ENCODE measurements at regions of chr10 and their contacts with region 1.

Region 1: DNA sequence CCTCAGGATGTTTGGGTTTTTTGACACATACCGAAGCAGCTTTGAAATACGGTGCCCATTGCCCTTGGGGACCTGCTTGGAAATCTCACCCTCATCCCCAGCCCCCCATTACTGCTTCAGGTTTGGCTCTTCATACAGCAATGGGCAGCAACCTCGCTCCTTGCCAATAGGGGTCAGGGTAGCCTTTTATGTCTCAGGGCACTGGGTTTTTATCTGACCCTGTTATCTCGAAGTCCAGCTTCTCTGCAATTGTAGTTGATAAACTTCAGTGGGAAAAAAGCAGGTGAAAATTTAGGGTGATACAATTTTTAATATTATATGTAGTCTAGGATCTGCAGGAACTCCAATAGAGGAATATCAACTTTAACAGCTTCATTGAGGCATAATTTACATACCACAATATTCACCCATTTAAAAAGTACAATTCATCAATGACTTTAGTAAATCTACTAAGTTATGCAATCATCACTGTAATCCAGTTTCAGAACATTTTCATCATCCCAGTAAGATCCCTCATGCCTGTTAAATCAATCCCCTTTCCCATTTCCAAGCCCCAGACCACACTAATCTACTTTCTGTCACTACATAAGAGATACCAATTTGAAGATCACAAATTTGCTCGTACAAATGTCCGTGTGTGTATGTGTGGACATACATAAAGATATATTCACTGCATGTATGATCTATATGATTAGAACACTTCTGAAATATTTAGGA is 386.2 kb downstream of the KCNMA1 start:
- DNase-seq: no peak
- ATAC-seq: peak; percentile 94
- H3K4me3 ChIP-seq: no peak overlapping the region
- H3K27ac ChIP-seq: no peak overlapping the region
- H3K4me1 ChIP-seq: no peaks in the 10 kb centered on the region
- H3K27me3 ChIP-seq: no peaks in the 10 kb centered on the region
- CTCF ChIP-seq: peak; percentile 59 to 76 (median 64)
- EP300 ChIP-seq: no peak
- POLR2A ChIP-seq: no peak
- RAD21 ChIP-seq: peak; percentile 66

Region 2: GRCh38 chr10:76150139-76150875 is 1101.1 kb before region 1 on chr10:
- CTCF ChIA-PET with region 1: no interaction called
- POLR2A ChIA-PET with region 1: no interaction called
- RAD21 ChIA-PET with region 1: no interaction called
- SMC1A ChIA-PET with region 1: no interaction called
- in situ Hi-C with region 1: no loop called
- intact Hi-C with region 1: no loop called
- DNase-seq: no peak
- ATAC-seq: no peak; the same call in 2 of the 3 replicates
- H3K4me3 ChIP-seq: no peak overlapping the region
- H3K27ac ChIP-seq: no peak overlapping the region
- H3K4me1 ChIP-seq: no peaks in the 10 kb centered on the region
- H3K27me3 ChIP-seq: no peaks in the 10 kb centered on the region
- CTCF ChIP-seq: no peak
- EP300 ChIP-seq: no peak
- POLR2A ChIP-seq: no peak
- RAD21 ChIP-seq: no peak

Region 3: GRCh38 chr10:77131214-77131613 is 120.2 kb before region 1 on chr10:
- CTCF ChIA-PET with region 1: no interaction called
- POLR2A ChIA-PET with region 1: no interaction called
- RAD21 ChIA-PET with region 1: no interaction called
- SMC1A ChIA-PET with region 1: no interaction called
- in situ Hi-C with region 1: no loop called
- intact Hi-C with region 1: no loop called
- DNase-seq: no peak
- ATAC-seq: no peak
- H3K4me3 ChIP-seq: no peak overlapping the region
- H3K27ac ChIP-seq: no peak overlapping the region
- H3K4me1 ChIP-seq: no peaks in the 10 kb centered on the region
- H3K27me3 ChIP-seq: no peaks in the 10 kb centered on the region
- CTCF ChIP-seq: no peak
- EP300 ChIP-seq: no peak
- POLR2A ChIP-seq: no peak
- RAD21 ChIP-seq: no peak

Region 4: GRCh38 chr10:77264107-77264506 is 12.7 kb after region 1 on chr10:
- CTCF ChIA-PET with region 1: interaction called, 3 read pairs
- POLR2A ChIA-PET with region 1: interaction called, 3 read pairs
- RAD21 ChIA-PET with region 1: interaction called, 6 read pairs
- SMC1A ChIA-PET with region 1: interaction called, 22 read pairs
- in situ Hi-C with region 1: no loop called
- intact Hi-C with region 1: no loop called
- DNase-seq: peak; percentile 42
- ATAC-seq: peak; percentile 98
- H3K4me3 ChIP-seq: no peak overlapping the region
- H3K27ac ChIP-seq: no peak overlapping the region
- H3K4me1 ChIP-seq: peaks cover 6% of the 10 kb centered on the region; the same call in 1 of the 2 replicates
- H3K27me3 ChIP-seq: 0 out of 4 replicates have a peak, but pooled peaks cover 0 to 3% of the 10 kb centered on the region in 2 experiments
- CTCF ChIP-seq: no peak
- EP300 ChIP-seq: peak in 1 of 2 experiments; percentile 61; a peak in 2 of 4 replicates
- POLR2A ChIP-seq: no peak
- RAD21 ChIP-seq: no peak

Region 5: DNA sequence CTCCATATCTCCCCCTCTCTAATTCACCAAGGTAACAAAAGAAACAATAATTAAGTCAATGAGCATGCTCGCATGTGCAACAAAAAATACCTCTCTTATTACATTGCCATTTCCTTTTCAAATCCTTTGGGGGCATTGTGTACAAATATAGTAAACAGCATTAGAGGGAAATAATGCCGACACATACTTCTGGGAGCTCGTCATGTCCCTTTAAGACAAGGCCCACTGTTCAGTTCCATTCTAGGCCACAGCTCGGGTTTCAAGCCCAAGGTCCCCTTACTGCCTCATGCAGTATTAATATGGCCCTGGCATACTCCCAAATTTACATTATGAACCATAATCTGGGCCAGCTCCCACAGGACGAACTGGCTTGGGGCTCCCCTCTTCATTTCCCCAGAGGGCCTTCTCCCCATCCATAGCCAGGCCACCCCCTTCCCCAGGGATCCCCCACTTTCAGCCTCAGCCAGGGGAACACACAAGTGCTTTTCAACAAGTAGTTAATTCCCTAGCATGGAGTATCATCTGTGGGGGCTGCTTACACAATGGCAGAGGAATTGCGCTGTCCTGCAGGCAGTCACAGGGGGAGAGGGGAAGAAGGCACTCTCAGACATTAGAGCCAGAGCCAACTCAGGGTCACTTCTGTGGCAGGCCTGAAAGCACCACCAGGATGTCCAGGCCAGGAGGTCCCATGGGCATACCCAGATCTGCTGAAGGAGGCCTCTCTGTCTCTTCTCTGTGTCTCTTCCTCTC is 275.6 kb after region 1 on chr10:
- CTCF ChIA-PET with region 1: no interaction called
- POLR2A ChIA-PET with region 1: no interaction called
- RAD21 ChIA-PET with region 1: no interaction called
- SMC1A ChIA-PET with region 1: no interaction called
- in situ Hi-C with region 1: no loop called
- intact Hi-C with region 1: no loop called
- DNase-seq: no peak
- ATAC-seq: no peak
- H3K4me3 ChIP-seq: no peak overlapping the region
- H3K27ac ChIP-seq: no peak overlapping the region
- H3K4me1 ChIP-seq: no peaks in the 10 kb centered on the region
- H3K27me3 ChIP-seq: no peaks in the 10 kb centered on the region; a peak in 1 of 4 replicates
- CTCF ChIP-seq: no peak
- EP300 ChIP-seq: no peak
- POLR2A ChIP-seq: no peak
- RAD21 ChIP-seq: no peak

Region 6: GRCh38 chr10:77746047-77746707 is 494.7 kb after region 1 on chr10:
- CTCF ChIA-PET with region 1: no interaction called
- POLR2A ChIA-PET with region 1: no interaction called
- RAD21 ChIA-PET with region 1: no interaction called
- SMC1A ChIA-PET with region 1: no interaction called
- in situ Hi-C with region 1: no loop called
- intact Hi-C with region 1: no loop called
- DNase-seq: no peak
- ATAC-seq: no peak
- H3K4me3 ChIP-seq: no peak overlapping the region
- H3K27ac ChIP-seq: no peak overlapping the region
- H3K4me1 ChIP-seq: no peaks in the 10 kb centered on the region
- H3K27me3 ChIP-seq: peaks cover 0 to 1% of the 10 kb centered on the region in 2 experiments; a peak in 2 of 4 replicates
- CTCF ChIP-seq: no peak
- EP300 ChIP-seq: no peak
- POLR2A ChIP-seq: no peak
- RAD21 ChIP-seq: no peak